HEK293 (cell line): ENCODE measurements at regions of chr7 and their contacts with region 1.

Region 1: GRCh38 chr7:100478966-100479665 is at the start of gene TSC22D4:
- H3K4me3 ChIP-seq: peak within 1 kb of the TSS; percentile 84
- H3K27ac ChIP-seq: peak within 1 kb of the TSS; percentile 80
- H3K4me1 ChIP-seq: peaks cover 7% of the 10 kb centered on the region
- CTCF ChIP-seq: no peak

Region 2: GRCh38 chr7:100275120-100275519 is 204.0 kb before region 1 on chr7:
- CTCF ChIA-PET with region 1: no interaction called
- POLR2A ChIA-PET with region 1: no interaction called
- H3K4me3 ChIP-seq: no peak overlapping the region
- H3K27ac ChIP-seq: no peak overlapping the region
- H3K4me1 ChIP-seq: no peaks in the 10 kb centered on the region
- CTCF ChIP-seq: no peak

Region 3: DNA sequence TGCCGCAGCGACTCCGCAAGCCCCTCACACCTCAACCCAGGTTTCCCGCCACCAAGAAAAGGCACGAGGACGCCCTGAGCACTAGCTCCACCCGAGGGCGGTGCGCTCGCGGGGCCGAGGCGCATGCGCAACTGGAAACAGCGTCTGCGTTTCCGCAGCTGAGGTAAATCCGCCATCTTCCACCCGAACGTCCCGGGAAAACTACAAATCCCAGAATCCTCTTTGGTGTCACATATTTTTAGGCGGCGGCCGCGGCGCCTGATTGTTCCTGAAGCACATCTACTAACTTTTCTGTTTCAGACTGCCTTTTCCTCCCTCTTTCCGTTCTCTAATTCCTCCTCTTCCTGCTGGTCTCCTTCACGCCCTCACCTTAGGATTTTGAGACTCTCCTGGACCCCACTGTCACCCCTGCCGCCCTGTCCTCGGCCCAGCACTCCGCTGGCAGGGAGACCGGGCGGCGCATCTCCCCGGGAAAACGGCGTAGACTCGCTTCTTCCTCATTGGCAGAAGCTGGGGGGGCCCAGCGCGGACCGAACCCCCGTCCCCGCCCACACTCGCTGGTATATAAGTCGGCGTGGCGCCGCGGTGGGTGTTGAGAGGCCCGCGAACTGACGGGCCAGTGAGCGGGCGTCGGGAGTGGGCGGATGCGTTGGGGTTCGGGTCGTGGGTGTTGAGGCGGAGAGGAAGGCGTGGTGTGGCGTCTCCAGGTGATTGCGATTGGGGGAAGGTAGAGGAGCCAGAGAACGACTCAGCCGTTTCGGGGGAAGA is 50.7 kb before region 1 on chr7 and contains the start of gene ZCWPW1:
- CTCF ChIA-PET with region 1: no interaction called
- POLR2A ChIA-PET with region 1: interaction called, 13 read pairs
- H3K4me3 ChIP-seq: peak within 1 kb of the TSS; percentile 83
- H3K27ac ChIP-seq: peak within 1 kb of the TSS; percentile 97
- H3K4me1 ChIP-seq: peaks cover 4% of the 10 kb centered on the region
- CTCF ChIP-seq: peak; percentile 28; the same call in 1 of the 2 replicates

Region 4: DNA sequence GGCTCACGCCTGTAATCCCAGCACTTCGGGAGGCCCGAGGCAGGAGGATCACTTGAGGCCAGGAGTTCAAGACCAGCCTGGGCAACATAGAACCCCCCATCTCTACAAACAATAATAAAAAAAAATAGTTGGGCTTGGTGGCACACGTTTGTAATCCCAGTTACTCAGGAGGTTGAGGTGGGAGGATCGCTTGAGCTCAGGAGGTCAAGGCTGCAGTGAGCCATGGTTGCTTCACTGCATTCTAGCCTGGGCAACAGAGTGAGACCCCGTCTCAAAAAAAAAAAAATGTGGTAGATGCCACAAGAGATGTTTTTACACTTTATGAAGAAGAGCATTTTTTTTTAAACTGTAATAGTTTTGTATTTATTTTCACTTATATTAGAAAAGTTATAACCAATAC is 17.4 kb after region 1 on chr7:
- CTCF ChIA-PET with region 1: interaction called, 10 read pairs
- POLR2A ChIA-PET with region 1: interaction called, 4 read pairs
- H3K4me3 ChIP-seq: no peak overlapping the region
- H3K27ac ChIP-seq: no peak overlapping the region
- H3K4me1 ChIP-seq: no peaks in the 10 kb centered on the region
- CTCF ChIP-seq: no peak

Region 5: GRCh38 chr7:100503345-100503725 is 24.2 kb after region 1 on chr7:
- CTCF ChIA-PET with region 1: interaction called, 11 read pairs
- POLR2A ChIA-PET with region 1: no interaction called
- H3K4me3 ChIP-seq: no peak overlapping the region
- H3K27ac ChIP-seq: no peak overlapping the region
- H3K4me1 ChIP-seq: no peaks in the 10 kb centered on the region
- CTCF ChIP-seq: no peak